Tibial artery (tissue), 4 donors: ENCODE measurements at regions of chr3 and their contacts with region 1.

Region 1: DNA sequence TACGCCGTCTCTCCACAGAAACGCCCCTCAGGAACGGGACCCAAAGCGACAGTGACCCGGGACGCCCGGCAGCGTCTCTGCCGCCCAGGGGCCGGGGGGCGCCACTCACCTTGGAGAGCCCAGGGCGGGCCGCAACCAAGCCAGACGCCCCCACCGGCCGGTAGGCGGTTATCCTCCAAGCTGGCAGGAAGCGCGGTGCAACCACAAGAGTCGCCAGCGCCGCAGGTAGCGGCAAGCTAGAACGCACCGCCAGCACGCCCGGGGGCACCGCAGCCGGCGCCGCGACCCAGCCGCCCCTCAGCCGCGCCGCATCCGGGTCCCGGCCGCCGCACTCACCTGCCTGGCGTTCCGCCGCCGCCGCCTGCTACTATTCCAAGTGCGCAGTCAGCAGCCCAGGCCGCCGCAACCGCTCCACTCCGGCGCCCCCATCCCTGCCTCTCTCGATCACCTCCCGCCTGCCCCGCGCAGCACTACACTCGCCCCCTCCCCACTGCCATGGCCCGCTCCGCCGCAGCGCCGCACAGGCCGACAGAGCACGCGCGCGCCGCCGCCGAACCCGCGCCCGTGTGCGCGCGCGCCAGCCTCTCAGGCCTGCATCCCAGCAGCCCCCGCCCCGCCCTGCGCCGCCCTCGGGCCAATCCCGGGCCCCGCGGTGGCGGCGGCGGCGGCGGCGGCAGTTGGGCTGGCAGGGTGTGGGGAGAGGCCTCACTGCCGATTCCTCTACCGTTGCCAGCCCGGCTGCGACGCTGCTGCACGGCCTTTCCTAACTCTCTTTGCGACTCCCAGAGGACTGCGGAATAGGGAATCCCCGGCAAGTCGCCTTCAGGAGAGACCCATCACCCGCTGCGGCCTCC is at the start of gene PIK3CB:
- DNase-seq: peak; percentile 84 to 93
- H3K4me3 ChIP-seq: peak within 1 kb of the TSS; percentile 69 to 86
- H3K27ac ChIP-seq: peak within 1 kb of the TSS; percentile 84 to 96
- H3K4me1 ChIP-seq: peaks cover 0 to 19% (median 11%) of the 10 kb centered on the region in 4 donors
- H3K27me3 ChIP-seq: no peaks in the 10 kb centered on the region
- CTCF ChIP-seq: peak in 1 of 2 experiments; percentile 26

Region 2: GRCh38 chr3:138915503-138916498 is 81.2 kb after region 1 on chr3:
- intact Hi-C with region 1: loop called (anchors 10 kb)
- DNase-seq: peak; percentile 91 to 95
- H3K4me3 ChIP-seq: peak overlapping the region; percentile 74 to 78
- H3K27ac ChIP-seq: peak overlapping the region; percentile 89 to 95
- H3K4me1 ChIP-seq: peaks cover 0 to 17% (median 10%) of the 10 kb centered on the region in 4 donors
- H3K27me3 ChIP-seq: no peaks in the 10 kb centered on the region
- CTCF ChIP-seq: peak; percentile 89 to 93